ENCODE measurements at regions of chr7 and their contacts with region 1.

Region 1: DNA sequence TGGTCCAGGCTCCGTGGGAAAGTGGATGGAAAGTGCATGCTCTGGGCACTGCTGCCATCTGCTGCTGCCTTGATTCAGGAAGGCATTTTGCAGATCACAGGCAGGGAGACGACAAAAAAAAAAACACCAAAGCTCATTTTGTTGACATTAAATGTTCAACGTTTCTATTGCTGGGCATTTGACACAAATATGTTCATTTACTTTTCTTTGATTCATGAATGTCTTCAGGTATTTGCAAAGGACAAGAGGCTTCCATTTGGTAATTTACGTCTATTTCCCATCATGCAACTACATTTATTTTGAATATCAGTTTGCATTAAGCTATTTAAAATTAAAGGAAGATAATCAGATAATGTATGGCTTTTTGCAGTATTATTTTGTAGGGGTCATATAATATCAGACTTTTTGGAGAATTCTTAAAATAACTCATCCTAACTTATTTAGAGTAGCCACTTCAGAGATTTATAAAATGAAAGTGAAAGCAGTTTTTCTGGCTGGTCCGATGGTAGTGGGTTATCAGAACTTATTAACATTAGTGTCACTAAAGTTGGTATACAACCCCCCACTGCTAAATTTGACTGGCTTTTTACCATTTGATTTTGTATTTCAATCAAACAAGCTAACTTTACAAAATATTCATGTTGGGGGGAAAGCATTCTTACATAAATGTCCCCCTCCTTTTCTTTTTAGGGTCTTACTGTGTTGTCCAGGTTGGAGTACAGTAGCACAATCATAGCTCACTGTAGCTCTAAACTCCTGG is 65.3 kb downstream of the PDIA4 start:
- ATAC-seq: peak; percentile 33 to 88 (median 78)
- H3K4me3 ChIP-seq: peak overlapping the region; percentile 60 to 81 (median 61)
- H3K27ac ChIP-seq: peak overlapping the region; percentile 71 to 91
- H3K4me1 ChIP-seq: no peaks in the 10 kb centered on the region

Region 2: DNA sequence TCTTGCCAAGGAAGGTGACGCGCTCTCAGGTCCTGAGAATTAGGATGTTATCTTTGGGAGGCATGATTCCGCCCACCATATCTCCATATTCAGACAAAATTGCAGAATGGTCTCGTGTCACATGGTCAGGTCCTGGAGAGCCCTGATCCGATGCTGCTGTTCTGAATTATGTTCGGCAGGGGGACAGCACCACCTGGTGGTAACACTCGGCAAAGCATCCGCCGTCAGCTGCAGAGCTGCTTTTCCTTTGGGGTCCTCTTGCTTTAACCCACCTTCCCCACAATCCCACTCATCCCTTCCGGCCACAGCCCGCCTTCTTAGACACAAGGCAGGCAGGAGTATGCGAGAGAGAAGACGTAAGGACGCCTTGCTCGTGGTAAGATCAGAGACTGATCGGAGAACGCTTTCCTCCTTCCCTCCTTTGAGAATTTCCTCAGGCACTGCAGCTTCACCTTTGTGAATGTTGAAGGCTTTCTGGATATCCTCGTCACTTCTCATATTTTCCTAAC is 700.2 kb before region 1 on chr7:
- in situ Hi-C with region 1: loop called in 5 of 9 experiments (anchors 25 kb)
- ATAC-seq: peak; percentile 86 to 97 (median 92)
- H3K4me3 ChIP-seq: no peak overlapping the region
- H3K27ac ChIP-seq: no peak overlapping the region
- H3K4me1 ChIP-seq: peaks cover 3% of the 10 kb centered on the region in 2 donors

Region 3: GRCh38 chr7:148485618-148486017 is 477.4 kb before region 1 on chr7:
- in situ Hi-C with region 1: loop called in 2 of 9 experiments (anchors 25 kb)
- ATAC-seq: peak; percentile 40 to 87 (median 60)
- H3K4me3 ChIP-seq: no peak overlapping the region
- H3K27ac ChIP-seq: no peak overlapping the region
- H3K4me1 ChIP-seq: peaks cover 3 to 22% of the 10 kb centered on the region in 2 donors

Region 4: DNA sequence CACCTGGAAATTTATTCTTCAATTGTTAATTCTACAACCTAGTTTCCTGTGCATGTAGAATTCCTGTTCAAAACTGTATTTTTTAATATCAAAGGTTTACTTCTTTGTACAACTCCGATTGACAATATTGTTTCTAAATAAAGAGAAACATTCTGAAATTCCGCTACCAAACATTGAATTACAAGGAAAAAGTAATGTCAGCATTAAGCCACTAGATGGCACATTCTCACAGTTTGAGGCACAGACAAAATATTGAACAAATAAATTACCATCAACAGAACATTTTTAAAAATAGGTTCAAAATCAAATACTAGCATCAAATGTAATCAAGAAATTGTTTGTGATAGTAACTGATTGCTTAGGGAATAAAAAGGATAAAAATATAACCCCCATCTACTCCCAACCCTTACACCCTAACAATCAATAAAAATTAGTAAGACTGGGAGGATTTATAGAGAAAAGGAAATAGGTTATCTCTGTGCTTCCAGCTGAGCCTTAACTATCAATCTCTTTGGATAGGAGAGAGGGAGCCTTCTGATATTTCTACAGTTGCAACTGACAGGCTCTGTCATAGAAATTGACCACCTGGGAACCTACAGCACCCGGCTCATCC is 459.0 kb before region 1 on chr7:
- in situ Hi-C with region 1: loop called in 5 of 9 experiments (anchors 10 to 25 kb)
- ATAC-seq: no peak
- H3K4me3 ChIP-seq: no peak overlapping the region
- H3K27ac ChIP-seq: no peak overlapping the region
- H3K4me1 ChIP-seq: peaks cover 3 to 39% of the 10 kb centered on the region in 2 donors

Region 5: GRCh38 chr7:148575640-148576411 is 387.2 kb before region 1 on chr7:
- in situ Hi-C with region 1: loop called in 1 of 9 experiments (anchors 25 kb)
- ATAC-seq: peak in 5 of 8 experiments; percentile 29 to 98 (median 85)
- H3K4me3 ChIP-seq: no peak overlapping the region
- H3K27ac ChIP-seq: no peak overlapping the region
- H3K4me1 ChIP-seq: no peaks in the 10 kb centered on the region

Region 6: GRCh38 chr7:149145026-149145845 is 182.2 kb after region 1 on chr7:
- in situ Hi-C with region 1: no loop called
- ATAC-seq: no peak
- H3K4me3 ChIP-seq: no peak overlapping the region
- H3K27ac ChIP-seq: no peak overlapping the region
- H3K4me1 ChIP-seq: peaks cover 13 to 20% of the 10 kb centered on the region in 2 donors

Measured in motor neuron (in vitro differentiated cells).